A549 (cell line): ENCODE measurements at regions of chr2 and their contacts with region 1.

Region 1: DNA sequence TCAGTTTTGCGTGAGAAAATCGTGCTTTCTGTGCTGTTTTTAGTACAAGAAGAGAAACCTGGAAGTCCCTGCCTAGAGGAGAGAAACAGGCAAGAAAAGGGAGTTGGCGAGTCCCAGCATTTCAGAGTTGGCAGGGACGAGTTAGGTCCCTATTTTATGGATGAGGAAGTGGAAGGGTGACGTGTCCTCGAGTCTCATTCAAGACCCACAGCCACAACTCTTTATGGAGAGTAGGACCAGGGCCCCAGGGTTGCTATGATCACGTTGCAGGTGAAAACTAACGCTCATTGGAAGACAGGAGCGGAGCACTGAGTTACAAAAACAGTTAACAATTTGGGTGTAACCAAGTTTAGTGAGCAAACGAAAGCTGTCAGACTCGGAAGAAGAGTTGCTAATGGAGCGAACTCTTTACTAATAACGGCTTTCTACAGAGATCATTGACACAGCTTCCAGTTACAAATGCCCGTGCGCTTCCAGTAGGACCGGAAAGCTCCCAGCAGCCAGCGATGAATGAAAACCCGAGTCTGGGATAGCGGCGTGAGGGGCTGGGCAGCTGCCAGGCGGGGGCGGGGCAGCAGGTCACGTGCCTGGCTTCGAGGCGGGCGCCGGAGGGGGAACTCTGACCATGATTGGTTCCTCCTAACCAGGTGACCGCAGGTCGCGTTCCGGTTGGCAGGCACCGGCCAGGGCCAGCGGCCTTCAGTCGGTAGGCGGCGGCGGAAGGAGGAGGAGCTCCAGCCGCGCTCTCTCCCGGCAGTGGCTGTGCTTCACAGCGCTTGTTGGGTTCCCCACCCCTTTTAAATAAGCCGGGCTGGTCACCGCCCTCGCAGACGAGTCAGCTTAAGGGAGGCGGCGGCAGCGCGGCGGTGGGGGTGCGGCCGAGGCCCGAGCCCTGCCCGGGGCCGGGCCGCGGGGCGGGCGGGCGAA is at the start of gene CCNYL1:
- DNase-seq: peak; percentile 99
- ATAC-seq: peak; percentile 96 to 98
- H3K4me3 ChIP-seq: peak within 1 kb of the TSS; percentile 85
- H3K27ac ChIP-seq: peak within 1 kb of the TSS; percentile 84 to 94
- H3K4me1 ChIP-seq: peaks cover 31% of the 10 kb centered on the region
- CTCF ChIP-seq: no peak
- EP300 ChIP-seq: no peak
- POLR2A ChIP-seq: peak; percentile 41; the same call in 1 of the 2 replicates
- RAD21 ChIP-seq: peak in 1 of 2 experiments; percentile 4; a peak in 1 of 5 replicates
- polyA plus RNA-seq, gene CCNYL1: 31.6 and 38.7 TPM in 2 replicates

Region 2: GRCh38 chr2:207467716-207468347 is 243.2 kb before region 1 on chr2:
- CTCF ChIA-PET with region 1: no interaction called
- POLR2A ChIA-PET with region 1: no interaction called
- DNase-seq: no peak
- ATAC-seq: no peak
- H3K4me3 ChIP-seq: no peak overlapping the region
- H3K27ac ChIP-seq: peak overlapping the region in 1 of 2 experiments; percentile 18; a peak in 2 of 6 replicates
- H3K4me1 ChIP-seq: peaks cover 15% of the 10 kb centered on the region
- CTCF ChIP-seq: no peak
- EP300 ChIP-seq: no peak
- POLR2A ChIP-seq: no peak
- RAD21 ChIP-seq: no peak

Region 3: GRCh38 chr2:207632575-207633493 is 78.2 kb before region 1 on chr2:
- CTCF ChIA-PET with region 1: interaction called, 66 read pairs
- POLR2A ChIA-PET with region 1: interaction called, 30 read pairs
- DNase-seq: peak; percentile 44 to 89
- ATAC-seq: peak; percentile 93 to 96
- H3K4me3 ChIP-seq: peak overlapping the region; percentile 21; the same call in 1 of the 3 replicates
- H3K27ac ChIP-seq: peak overlapping the region; percentile 89 to 94
- H3K4me1 ChIP-seq: peaks cover 53% of the 10 kb centered on the region
- CTCF ChIP-seq: no peak
- EP300 ChIP-seq: peak; percentile 7 to 58; a peak in 3 of 5 replicates
- POLR2A ChIP-seq: no peak
- RAD21 ChIP-seq: peak in 1 of 2 experiments; percentile 15; a peak in 2 of 5 replicates

Region 4: DNA sequence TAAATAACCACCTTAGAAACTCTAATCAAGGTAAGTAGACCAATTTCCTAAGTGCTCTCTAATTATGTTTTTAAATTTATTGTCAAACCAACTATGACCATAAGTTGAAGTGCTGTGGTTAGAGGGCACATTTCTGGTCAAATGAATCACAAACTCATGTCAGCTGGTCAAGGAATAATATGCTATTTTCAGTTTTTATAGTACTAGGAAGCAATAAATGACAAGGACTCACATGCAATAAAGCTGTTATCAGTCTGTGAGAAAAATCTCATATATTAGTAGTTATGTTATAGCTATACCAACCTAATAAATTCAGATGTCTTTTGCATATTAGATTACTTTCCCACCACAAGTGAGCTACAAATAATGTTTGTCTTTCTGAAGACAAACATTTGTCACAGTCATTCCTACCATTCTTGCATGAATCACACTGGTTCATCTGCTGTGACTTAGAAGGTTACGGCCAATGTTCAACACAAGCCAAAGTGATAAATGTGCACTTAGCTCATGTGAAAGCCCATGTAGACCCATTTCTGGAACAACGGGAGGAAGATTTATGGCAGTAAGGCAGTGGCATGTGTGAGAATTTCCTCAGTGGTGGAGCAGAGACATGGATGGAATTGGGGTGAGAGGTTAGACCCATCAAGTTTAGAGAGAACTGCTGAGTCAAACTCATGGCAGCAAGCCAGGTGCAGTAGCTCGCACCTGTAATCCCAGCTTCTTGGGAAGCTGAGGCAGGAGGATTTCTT is 27.0 kb before region 1 on chr2:
- CTCF ChIA-PET with region 1: interaction called, 6 read pairs
- POLR2A ChIA-PET with region 1: interaction called, 24 read pairs
- DNase-seq: peak; percentile 60 to 96
- ATAC-seq: peak; percentile 96
- H3K4me3 ChIP-seq: no peak overlapping the region
- H3K27ac ChIP-seq: peak overlapping the region; percentile 82 to 92
- H3K4me1 ChIP-seq: peaks cover 32% of the 10 kb centered on the region
- CTCF ChIP-seq: no peak
- EP300 ChIP-seq: peak; percentile 48 to 75; a peak in 3 of 5 replicates
- POLR2A ChIP-seq: no peak
- RAD21 ChIP-seq: no peak

Region 5: GRCh38 chr2:207692206-207693065 is 18.6 kb before region 1 on chr2:
- CTCF ChIA-PET with region 1: interaction called, 49 read pairs
- POLR2A ChIA-PET with region 1: interaction called, 8 read pairs
- DNase-seq: peak; percentile 50 to 74
- ATAC-seq: peak; percentile 71 to 89; a peak in 5 of 6 replicates
- H3K4me3 ChIP-seq: no peak overlapping the region
- H3K27ac ChIP-seq: peak overlapping the region in 1 of 2 experiments; percentile 12; a peak in 1 of 6 replicates
- H3K4me1 ChIP-seq: peaks cover 20% of the 10 kb centered on the region
- CTCF ChIP-seq: peak; percentile 58
- EP300 ChIP-seq: no peak
- POLR2A ChIP-seq: no peak
- RAD21 ChIP-seq: peak; percentile 32 to 63; a peak in 4 of 5 replicates

Region 6: DNA sequence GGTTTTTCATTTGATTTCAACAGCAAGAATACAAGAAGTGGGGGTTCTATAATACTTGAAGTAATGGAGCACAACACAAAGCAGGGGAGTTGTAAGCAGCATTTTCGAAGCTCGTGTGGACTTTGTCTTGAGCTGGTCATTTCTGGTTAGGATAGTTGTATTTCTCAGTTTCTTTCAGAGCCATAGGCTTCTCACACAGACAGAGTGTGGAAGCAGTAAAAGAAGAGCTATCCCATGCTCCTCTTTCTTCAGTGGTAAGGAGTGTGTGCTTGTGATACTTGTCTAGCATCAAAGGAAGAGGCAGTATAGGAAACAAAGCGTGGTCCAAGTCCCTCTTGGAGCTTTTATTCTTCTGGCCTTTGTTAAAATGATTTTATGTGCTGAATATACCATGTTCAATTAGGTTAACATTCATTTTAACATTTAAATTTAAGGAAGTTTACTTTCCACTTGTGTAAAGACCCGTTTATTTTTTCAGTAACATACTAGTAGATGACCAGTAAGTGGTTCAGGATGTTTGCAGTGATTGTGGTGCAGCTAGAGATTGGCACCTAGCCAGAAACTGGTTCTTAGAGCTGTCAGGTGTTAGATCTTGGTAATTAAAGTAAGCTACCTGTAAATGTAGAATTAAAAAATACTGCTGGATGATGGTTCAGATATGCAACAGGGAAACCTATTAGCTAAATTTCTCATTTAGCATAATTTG is 14.9 kb after region 1 on chr2:
- CTCF ChIA-PET with region 1: interaction called, 5 read pairs
- POLR2A ChIA-PET with region 1: interaction called, 16 read pairs
- DNase-seq: peak in 1 of 2 experiments; percentile 31
- ATAC-seq: peak; percentile 52 to 56; a peak in 5 of 6 replicates
- H3K4me3 ChIP-seq: no peak overlapping the region
- H3K27ac ChIP-seq: peak overlapping the region; percentile 28 to 74; a peak in 4 of 6 replicates
- H3K4me1 ChIP-seq: peaks cover 61% of the 10 kb centered on the region
- CTCF ChIP-seq: no peak
- EP300 ChIP-seq: no peak
- POLR2A ChIP-seq: no peak
- RAD21 ChIP-seq: no peak